SK-N-SH (cell line): ENCODE measurements at regions of chr18 and their contacts with region 1.

Region 1: GRCh38 chr18:24514439-24514838 is 54.0 kb downstream of the HRH4 start:
- DNase-seq: peak; percentile 39
- H3K4me3 ChIP-seq: no peak overlapping the region
- H3K27ac ChIP-seq: no peak overlapping the region
- H3K4me1 ChIP-seq: no peaks in the 10 kb centered on the region
- H3K27me3 ChIP-seq: no peaks in the 10 kb centered on the region
- CTCF ChIP-seq: peak; percentile 62
- EP300 ChIP-seq: no peak
- RAD21 ChIP-seq: no peak

Region 2: DNA sequence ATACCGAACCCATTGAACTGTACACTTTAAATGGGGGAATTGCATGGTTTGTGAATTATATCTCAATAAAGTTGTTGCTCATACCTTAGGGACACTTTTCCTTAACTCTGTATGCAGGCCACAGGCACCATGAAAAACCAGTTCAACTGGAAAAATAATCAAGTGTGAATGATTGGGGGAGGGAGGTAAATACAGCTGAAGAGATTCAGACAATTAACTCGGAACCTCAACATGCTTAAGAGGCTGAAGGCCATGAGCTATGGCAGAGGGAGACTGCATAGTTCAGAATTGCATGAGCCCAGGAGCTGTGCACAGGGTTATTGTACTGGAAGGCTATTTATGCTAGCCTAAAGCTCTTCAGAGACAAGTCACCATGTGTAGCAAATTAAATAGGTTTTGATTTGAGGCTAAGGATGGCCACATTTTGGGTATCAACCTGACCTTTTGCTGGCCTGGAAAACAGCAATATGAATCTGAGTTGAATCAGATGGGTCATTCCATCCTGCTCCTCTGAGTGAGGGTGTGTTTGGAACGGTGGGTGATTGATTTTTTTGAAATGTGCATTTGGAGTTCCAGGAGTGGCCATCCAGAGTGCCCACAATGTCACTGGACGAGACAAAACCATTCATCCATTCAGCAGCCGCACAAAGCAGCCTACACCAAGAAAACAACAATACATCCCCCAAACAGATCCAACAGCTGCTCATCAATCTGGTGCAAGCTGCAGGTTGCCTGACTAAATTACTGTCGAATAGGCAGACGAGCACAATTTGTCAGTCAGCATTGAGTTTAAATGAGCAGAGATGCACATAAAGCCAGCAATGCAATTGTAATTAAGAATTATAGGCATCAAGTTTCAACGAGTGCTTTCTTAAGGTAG is 11.6 kb before region 1 on chr18:
- CTCF ChIA-PET with region 1: interaction called, 24 read pairs
- POLR2A ChIA-PET with region 1: no interaction called
- DNase-seq: no peak
- H3K4me3 ChIP-seq: no peak overlapping the region
- H3K27ac ChIP-seq: no peak overlapping the region
- H3K4me1 ChIP-seq: no peaks in the 10 kb centered on the region
- H3K27me3 ChIP-seq: no peaks in the 10 kb centered on the region; the same call in 1 of the 2 replicates
- CTCF ChIP-seq: no peak
- EP300 ChIP-seq: no peak
- RAD21 ChIP-seq: no peak

Region 3: DNA sequence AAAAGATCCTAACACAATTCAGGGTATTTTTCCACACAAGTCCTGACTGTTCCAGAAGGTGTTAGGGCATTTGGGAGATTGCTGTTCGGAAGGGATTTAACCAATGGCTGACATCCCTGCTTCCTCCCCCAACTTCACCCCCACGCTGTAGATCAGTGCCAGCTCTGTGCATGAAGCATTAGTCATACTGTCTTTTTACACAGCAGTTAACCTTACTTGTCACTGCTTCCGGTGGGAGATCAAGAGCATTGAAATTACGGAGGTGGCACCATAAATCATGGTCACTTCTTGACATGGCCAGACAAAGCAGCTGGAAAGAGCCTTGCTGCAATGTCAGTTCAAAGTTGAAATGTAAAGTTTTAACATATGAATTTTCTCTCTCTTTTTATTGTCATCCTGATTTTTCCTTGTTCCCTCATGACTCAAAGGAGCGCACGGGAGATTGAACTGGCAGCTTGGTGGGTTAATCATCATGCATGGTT is 16.2 kb after region 1 on chr18:
- CTCF ChIA-PET with region 1: interaction called, 16 read pairs
- POLR2A ChIA-PET with region 1: no interaction called
- DNase-seq: no peak
- H3K4me3 ChIP-seq: no peak overlapping the region
- H3K27ac ChIP-seq: no peak overlapping the region
- H3K4me1 ChIP-seq: no peaks in the 10 kb centered on the region
- H3K27me3 ChIP-seq: no peaks in the 10 kb centered on the region; the same call in 1 of the 2 replicates
- CTCF ChIP-seq: no peak
- EP300 ChIP-seq: no peak
- RAD21 ChIP-seq: no peak